ENCODE measurements at regions of chr2 and their contacts with region 1.

Region 1: GRCh38 chr2:46776687-46777327 is 138.8 kb downstream of the MCFD2 start:
- DNase-seq: peak; percentile 84
- ATAC-seq: peak; percentile 70
- H3K4me3 Mint-ChIP-seq: no peak overlapping the region
- H3K27ac Mint-ChIP-seq: no peak overlapping the region
- H3K4me1 Mint-ChIP-seq: no peaks in the 10 kb centered on the region
- H3K27me3 Mint-ChIP-seq: peaks cover 3% of the 10 kb centered on the region
- CTCF ChIP-seq: peak; percentile 82

Region 2: DNA sequence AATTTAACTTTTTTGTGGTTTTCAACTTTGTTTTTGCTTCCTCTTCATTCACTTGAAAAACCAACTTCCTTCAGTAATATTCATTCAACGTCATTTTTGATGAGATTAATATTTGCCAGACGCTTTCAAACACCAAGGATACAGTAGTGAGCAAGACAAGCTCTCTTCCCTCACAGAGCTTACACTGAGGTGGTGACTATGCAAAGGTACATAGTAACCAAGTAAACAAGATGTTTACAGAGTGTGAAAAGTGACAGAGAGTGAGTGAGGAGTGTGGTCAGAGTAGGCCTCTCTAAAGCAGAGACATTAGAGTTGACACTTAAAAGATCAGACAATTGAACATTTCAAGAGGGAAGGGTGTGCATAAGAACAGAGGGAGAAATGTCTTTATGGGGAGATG is 141.9 kb before region 1 on chr2:
- CTCF ChIA-PET with region 1: interaction called, 12 read pairs
- POLR2A ChIA-PET with region 1: no interaction called
- intact Hi-C with region 1: no loop called
- DNase-seq: no peak
- ATAC-seq: peak; percentile 81
- H3K4me3 Mint-ChIP-seq: no peak overlapping the region
- H3K27ac Mint-ChIP-seq: peak overlapping the region; percentile 7
- H3K4me1 Mint-ChIP-seq: peaks cover 12% of the 10 kb centered on the region
- H3K27me3 Mint-ChIP-seq: no peaks in the 10 kb centered on the region
- CTCF ChIP-seq: no peak

Region 3: GRCh38 chr2:46657042-46657504 is 119.7 kb before region 1 on chr2:
- CTCF ChIA-PET with region 1: interaction called, 28 read pairs
- POLR2A ChIA-PET with region 1: no interaction called
- intact Hi-C with region 1: loop called (anchors 5 kb)
- DNase-seq: no peak
- ATAC-seq: peak; percentile 51
- H3K4me3 Mint-ChIP-seq: no peak overlapping the region
- H3K27ac Mint-ChIP-seq: no peak overlapping the region
- H3K4me1 Mint-ChIP-seq: no peaks in the 10 kb centered on the region
- H3K27me3 Mint-ChIP-seq: no peaks in the 10 kb centered on the region
- CTCF ChIP-seq: peak; percentile 28

Region 4: GRCh38 chr2:46719487-46719886 is 57.3 kb before region 1 on chr2:
- CTCF ChIA-PET with region 1: interaction called, 11 read pairs
- POLR2A ChIA-PET with region 1: no interaction called
- intact Hi-C with region 1: no loop called
- DNase-seq: no peak
- ATAC-seq: peak; percentile 10
- H3K4me3 Mint-ChIP-seq: no peak overlapping the region
- H3K27ac Mint-ChIP-seq: no peak overlapping the region
- H3K4me1 Mint-ChIP-seq: peaks cover 60% of the 10 kb centered on the region
- H3K27me3 Mint-ChIP-seq: no peaks in the 10 kb centered on the region
- CTCF ChIP-seq: no peak

Measured in activated CD8-positive, alpha-beta T cell treated with anti-CD3 and anti-CD28 coated beads for 36 hours (primary cell).